ENCODE measurements at regions of chr12 and their contacts with region 1.

Region 1: GRCh38 chr12:9464408-9464807 is 143.3 kb downstream of the KLRB1 start:
- DNase-seq: no peak
- H3K4me3 ChIP-seq: no peak overlapping the region
- H3K27ac ChIP-seq: no peak overlapping the region
- H3K4me1 ChIP-seq: no peaks in the 10 kb centered on the region
- H3K27me3 ChIP-seq: no peaks in the 10 kb centered on the region
- CTCF ChIP-seq: no peak
- EP300 ChIP-seq: no peak
- RAD21 ChIP-seq: no peak

Region 2: GRCh38 chr12:9331218-9331626 is 133.2 kb before region 1 on chr12:
- CTCF ChIA-PET with region 1: interaction called, 30 read pairs
- POLR2A ChIA-PET with region 1: no interaction called
- DNase-seq: peak; percentile 72
- H3K4me3 ChIP-seq: peak overlapping the region in 1 of 2 experiments; percentile 50; a peak in 1 of 4 replicates
- H3K27ac ChIP-seq: no peak overlapping the region
- H3K4me1 ChIP-seq: no peaks in the 10 kb centered on the region; a peak in 1 of 4 replicates
- H3K27me3 ChIP-seq: no peaks in the 10 kb centered on the region; the same call in 1 of the 2 replicates
- CTCF ChIP-seq: peak; percentile 93
- EP300 ChIP-seq: no peak
- RAD21 ChIP-seq: peak; percentile 92

Region 3: GRCh38 chr12:9372202-9372601 is 92.2 kb before region 1 on chr12:
- CTCF ChIA-PET with region 1: interaction called, 28 read pairs
- POLR2A ChIA-PET with region 1: no interaction called
- DNase-seq: no peak
- H3K4me3 ChIP-seq: no peak overlapping the region
- H3K27ac ChIP-seq: no peak overlapping the region
- H3K4me1 ChIP-seq: no peaks in the 10 kb centered on the region
- H3K27me3 ChIP-seq: no peaks in the 10 kb centered on the region; the same call in 1 of the 2 replicates
- CTCF ChIP-seq: no peak
- EP300 ChIP-seq: no peak
- RAD21 ChIP-seq: peak; percentile 41

Region 4: GRCh38 chr12:9378430-9378835 is 86.0 kb before region 1 on chr12:
- CTCF ChIA-PET with region 1: interaction called, 28 read pairs
- POLR2A ChIA-PET with region 1: no interaction called
- DNase-seq: peak; percentile 47
- H3K4me3 ChIP-seq: no peak overlapping the region
- H3K27ac ChIP-seq: no peak overlapping the region
- H3K4me1 ChIP-seq: no peaks in the 10 kb centered on the region
- H3K27me3 ChIP-seq: no peaks in the 10 kb centered on the region; the same call in 1 of the 2 replicates
- CTCF ChIP-seq: peak; percentile 22; the same call in 1 of the 2 replicates
- EP300 ChIP-seq: no peak
- RAD21 ChIP-seq: peak; percentile 69

Measured in SK-N-SH (cell line).